Posterior cingulate gyrus (tissue), 11 donors: ENCODE measurements at regions of chr3 and their contacts with region 1.

Region 1: GRCh38 chr3:100590114-100590839 is 19.1 kb upstream of the ADGRG7 start:
- DNase-seq: peak in 4 of 10 donors; percentile 48 to 61 (median 52)

Region 2: GRCh38 chr3:99833617-99834205 is 756.6 kb before region 1 on chr3:
- intact Hi-C with region 1: loop called (anchors 10 kb)
- DNase-seq: no peak

Region 3: GRCh38 chr3:100316641-100317069 is 273.6 kb before region 1 on chr3:
- intact Hi-C with region 1: loop called (anchors 5 kb)
- DNase-seq: no peak

Region 4: GRCh38 chr3:100463002-100463401 is 127.3 kb before region 1 on chr3:
- intact Hi-C with region 1: loop called (anchors 1 kb)
- DNase-seq: peak in 2 of 10 donors; percentile 15 to 39

Region 5: GRCh38 chr3:100480111-100480510 is 110.2 kb before region 1 on chr3:
- intact Hi-C with region 1: no loop called
- DNase-seq: peak in 1 of 10 donors; percentile 62

Region 6: GRCh38 chr3:101203411-101203810 is 613.1 kb after region 1 on chr3:
- intact Hi-C with region 1: no loop called
- DNase-seq: no peak